ENCODE measurements at regions of chr17 and their contacts with region 1.

Region 1: GRCh38 chr17:31842183-31843069 is 16.6 kb downstream of the COPRS start:
- DNase-seq: peak; percentile 76
- H3K4me3 Mint-ChIP-seq: no peak overlapping the region
- H3K27ac Mint-ChIP-seq: no peak overlapping the region
- H3K4me1 Mint-ChIP-seq: no peaks in the 10 kb centered on the region
- H3K27me3 Mint-ChIP-seq: peaks cover 30% of the 10 kb centered on the region

Region 2: DNA sequence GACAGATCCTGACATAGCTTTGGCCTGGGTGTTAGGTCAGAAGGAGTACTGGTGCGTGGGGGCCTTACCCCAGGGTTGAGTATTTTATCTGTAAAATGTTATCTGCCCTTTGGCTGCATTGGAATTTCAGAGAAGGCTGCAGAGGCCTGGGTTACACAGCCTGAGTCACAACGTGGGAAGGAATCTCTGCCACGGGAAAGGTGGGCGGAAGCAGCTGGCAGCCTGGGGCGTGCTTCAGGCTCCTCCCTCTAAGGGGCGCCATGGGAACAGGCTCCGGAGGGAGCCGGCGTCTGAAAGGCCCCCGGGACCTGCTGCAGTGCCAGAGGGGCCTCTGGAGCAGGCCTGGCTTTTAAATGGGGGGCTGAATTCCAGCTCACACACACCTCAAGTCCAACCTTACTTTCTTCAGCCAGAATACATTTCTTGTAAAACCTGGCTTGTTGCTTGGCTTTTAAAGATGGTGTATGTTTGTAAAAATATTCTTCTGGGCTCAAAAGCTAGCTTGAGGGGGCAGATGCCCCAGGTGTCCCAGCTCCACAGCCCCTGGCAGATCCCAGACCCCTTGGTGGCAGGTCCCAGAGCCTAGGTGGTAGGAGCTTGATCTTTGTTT is 308.8 kb before region 1 on chr17:
- CTCF ChIA-PET with region 1: interaction called, 33 read pairs
- DNase-seq: no peak
- H3K4me3 Mint-ChIP-seq: no peak overlapping the region
- H3K27ac Mint-ChIP-seq: no peak overlapping the region
- H3K4me1 Mint-ChIP-seq: peaks cover 6% of the 10 kb centered on the region
- H3K27me3 Mint-ChIP-seq: no peaks in the 10 kb centered on the region

Region 3: GRCh38 chr17:31558748-31559644 is 283.4 kb before region 1 on chr17:
- CTCF ChIA-PET with region 1: interaction called, 22 read pairs
- DNase-seq: peak; percentile 65
- H3K4me3 Mint-ChIP-seq: peak overlapping the region; percentile 63
- H3K27ac Mint-ChIP-seq: no peak overlapping the region
- H3K4me1 Mint-ChIP-seq: peaks cover 30% of the 10 kb centered on the region
- H3K27me3 Mint-ChIP-seq: peaks cover 64% of the 10 kb centered on the region

Region 4: GRCh38 chr17:31854672-31855071 is 12.2 kb after region 1 on chr17:
- CTCF ChIA-PET with region 1: interaction called, 14 read pairs
- DNase-seq: no peak
- H3K4me3 Mint-ChIP-seq: no peak overlapping the region
- H3K27ac Mint-ChIP-seq: no peak overlapping the region
- H3K4me1 Mint-ChIP-seq: peaks cover 16% of the 10 kb centered on the region
- H3K27me3 Mint-ChIP-seq: peaks cover 5% of the 10 kb centered on the region